Motor neuron (in vitro differentiated cells): ENCODE measurements at regions of chr2 and their contacts with region 1.

Region 1: GRCh38 chr2:30178618-30179434 is 32.0 kb downstream of the YPEL5 start:
- ATAC-seq: peak in 3 of 8 experiments; percentile 66 to 97 (median 96)
- H3K4me3 ChIP-seq: no peak overlapping the region
- H3K27ac ChIP-seq: no peak overlapping the region
- H3K4me1 ChIP-seq: no peaks in the 10 kb centered on the region

Region 2: DNA sequence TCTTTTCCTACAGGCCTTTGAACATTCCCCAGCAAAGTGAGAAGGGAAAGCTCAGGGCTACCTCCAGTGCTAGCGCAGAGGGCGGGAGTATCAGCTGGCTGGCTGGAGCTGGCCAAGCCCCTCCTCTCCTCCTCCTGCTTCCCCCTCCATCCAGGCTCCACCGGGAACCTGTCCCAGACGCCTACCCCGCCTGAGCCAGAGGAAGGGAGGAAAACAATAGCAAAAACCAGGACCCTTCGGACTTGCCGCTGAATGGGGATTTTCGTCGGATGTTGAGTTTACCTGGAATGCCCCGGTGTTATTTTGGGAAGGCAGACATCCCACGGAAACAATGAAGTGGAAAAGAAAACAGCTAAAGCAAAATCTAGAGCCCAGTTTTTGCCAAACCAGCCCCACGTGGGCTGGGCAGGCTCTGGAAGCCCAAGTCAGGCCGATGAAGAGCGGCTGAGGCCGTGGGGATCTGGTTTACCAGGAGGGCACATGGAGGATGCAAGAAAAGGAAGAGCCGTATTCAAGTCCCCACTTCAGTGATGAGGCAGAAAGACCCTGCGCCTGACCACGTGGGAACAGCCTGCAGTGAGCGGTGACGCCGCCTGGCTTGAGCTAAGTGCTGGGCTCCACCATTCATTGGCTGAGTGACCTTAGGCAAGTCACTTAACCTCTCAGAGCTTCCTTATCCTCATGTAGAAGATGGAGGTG is 167.8 kb after region 1 on chr2:
- in situ Hi-C with region 1: no loop called
- ATAC-seq: peak in 6 of 8 experiments; percentile 42 to 95 (median 74)
- H3K4me3 ChIP-seq: no peak overlapping the region
- H3K27ac ChIP-seq: no peak overlapping the region
- H3K4me1 ChIP-seq: peaks cover 0 to 2% of the 10 kb centered on the region in 2 donors

Region 3: DNA sequence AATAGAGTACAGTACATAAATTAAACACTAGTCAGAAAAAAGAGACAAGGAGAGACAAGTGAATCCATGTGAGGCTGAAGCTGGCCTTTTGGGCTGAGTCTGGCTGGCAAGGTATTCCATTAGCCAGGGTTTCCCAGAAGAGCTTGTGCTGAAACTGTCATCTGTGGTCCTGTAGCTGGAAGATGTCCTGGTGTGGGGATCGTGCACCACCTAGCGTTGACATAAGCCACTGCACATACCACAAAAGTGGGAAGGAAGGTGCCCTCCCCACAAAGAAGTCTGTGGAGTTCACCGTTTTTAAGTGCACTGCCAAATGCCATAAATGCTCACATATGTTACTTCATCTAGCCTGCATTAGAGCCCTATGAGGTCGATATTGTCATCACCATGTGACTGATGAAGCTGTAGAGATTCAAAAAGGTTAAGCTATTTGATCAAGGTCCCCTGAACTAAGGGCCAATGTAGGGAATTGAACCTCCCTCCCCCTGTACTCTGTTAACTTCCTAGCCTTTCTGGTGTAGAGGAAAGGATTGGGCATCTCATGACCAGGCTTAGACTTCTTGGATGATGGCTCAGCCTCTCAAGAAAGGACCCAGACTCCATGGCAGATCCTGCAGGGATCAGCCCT is 991.4 kb after region 1 on chr2:
- in situ Hi-C with region 1: loop called in 1 of 9 experiments (anchors 25 kb)
- ATAC-seq: peak; percentile 76 to 98 (median 88)
- H3K4me3 ChIP-seq: no peak overlapping the region
- H3K27ac ChIP-seq: no peak overlapping the region
- H3K4me1 ChIP-seq: peaks cover 0 to 3% of the 10 kb centered on the region in 2 donors